GM12878 (cell line): ENCODE measurements at regions of chr2 and their contacts with region 1.

Region 1: DNA sequence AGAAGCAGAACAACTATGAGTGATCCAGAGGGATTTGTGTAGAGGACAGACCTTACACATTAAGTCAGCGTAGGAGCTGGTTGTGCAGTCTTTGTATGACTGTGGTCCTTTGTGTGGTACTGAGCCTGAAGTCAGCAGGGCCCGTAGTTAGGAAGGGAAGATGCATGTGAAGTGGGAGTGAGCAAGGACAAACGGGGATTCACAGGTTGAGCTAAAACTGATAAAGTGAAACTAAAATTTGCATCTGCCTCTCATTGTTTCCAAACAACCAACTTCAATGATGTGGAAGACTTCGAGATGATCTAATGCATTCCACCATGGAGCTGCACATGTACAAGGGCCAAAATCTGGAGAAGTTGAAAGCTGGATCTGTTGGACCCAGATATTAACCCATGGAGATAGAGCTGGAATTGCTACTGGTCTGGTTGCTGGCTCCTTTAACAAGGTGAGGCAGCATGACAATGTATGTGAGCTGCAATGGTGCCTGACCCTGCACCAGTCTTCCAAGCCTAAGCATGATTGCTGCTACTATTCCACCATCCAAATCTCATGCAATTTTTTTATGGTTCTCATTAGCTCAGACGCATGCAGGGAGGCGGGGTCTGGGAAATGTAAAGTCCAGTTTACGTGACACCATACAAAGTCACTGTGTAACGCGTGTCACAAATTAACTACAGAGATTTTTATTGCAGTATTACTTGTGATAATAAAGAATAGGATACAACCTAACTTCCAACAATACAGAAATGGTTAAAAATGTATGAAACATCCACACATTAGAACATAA is 12.1 kb upstream of the CYBRD1 start:
- DNase-seq: peak; percentile 75
- ATAC-seq: peak; percentile 83
- H3K4me3 ChIP-seq: no peak overlapping the region
- H3K27ac ChIP-seq: peak overlapping the region; percentile 30
- H3K4me1 ChIP-seq: peaks cover 30% of the 10 kb centered on the region
- H3K27me3 ChIP-seq: no peaks in the 10 kb centered on the region
- CTCF ChIP-seq: no peak
- EP300 ChIP-seq: peak in 1 of 2 experiments; percentile 35; a peak in 1 of 4 replicates
- POLR2A ChIP-seq: no peak
- RAD21 ChIP-seq: no peak

Region 2: DNA sequence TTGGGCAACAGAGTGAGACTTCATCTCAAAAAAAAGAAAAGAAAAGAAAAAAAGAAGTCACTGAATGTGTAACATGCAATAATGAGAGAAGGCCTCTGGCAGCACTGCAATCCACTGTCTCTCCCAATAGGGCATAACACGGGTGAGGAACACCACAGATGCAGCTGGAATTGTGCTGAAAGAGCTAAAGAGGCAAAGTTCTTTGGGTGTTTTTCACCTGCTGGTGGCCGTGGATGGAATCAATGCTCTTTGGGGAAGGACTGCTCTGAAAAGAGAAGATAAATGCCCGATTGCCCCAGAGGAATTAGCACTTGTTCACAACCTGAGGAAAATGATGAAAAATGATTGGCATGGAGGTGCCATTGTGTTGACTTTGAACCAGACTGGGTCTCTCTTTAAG is 18.8 kb before region 1 on chr2:
- CTCF ChIA-PET with region 1: interaction called, 6 read pairs
- POLR2A ChIA-PET with region 1: no interaction called
- RAD21 ChIA-PET with region 1: no interaction called
- SMC1A ChIA-PET with region 1: interaction called, 13 read pairs
- in situ Hi-C with region 1: no loop called
- intact Hi-C with region 1: no loop called
- DNase-seq: no peak
- ATAC-seq: no peak
- H3K4me3 ChIP-seq: no peak overlapping the region
- H3K27ac ChIP-seq: no peak overlapping the region
- H3K4me1 ChIP-seq: no peaks in the 10 kb centered on the region
- H3K27me3 ChIP-seq: no peaks in the 10 kb centered on the region
- CTCF ChIP-seq: no peak
- EP300 ChIP-seq: no peak
- POLR2A ChIP-seq: no peak
- RAD21 ChIP-seq: no peak

Region 3: GRCh38 chr2:171522052-171522787 is 12.1 kb after region 1 on chr2 and contains the start of gene CYBRD1:
- CTCF ChIA-PET with region 1: interaction called, 14 read pairs
- POLR2A ChIA-PET with region 1: interaction called, 13 read pairs
- RAD21 ChIA-PET with region 1: interaction called, 13 read pairs
- SMC1A ChIA-PET with region 1: interaction called, 46 read pairs
- in situ Hi-C with region 1: no loop called
- intact Hi-C with region 1: no loop called
- DNase-seq: no peak
- ATAC-seq: peak; percentile 79
- H3K4me3 ChIP-seq: peak within 1 kb of the TSS; percentile 95
- H3K27ac ChIP-seq: peak within 1 kb of the TSS; percentile 81
- H3K4me1 ChIP-seq: peaks cover 6% of the 10 kb centered on the region; the same call in 1 of the 2 replicates
- H3K27me3 ChIP-seq: no peaks in the 10 kb centered on the region
- CTCF ChIP-seq: 0 out of 6 replicates have a peak, but pooled peaks of 1 of the 3 experiments have one; percentile 4
- EP300 ChIP-seq: no peak
- POLR2A ChIP-seq: peak; percentile 90
- RAD21 ChIP-seq: no peak
- polyA plus RNA-seq, gene CYBRD1: 10.8 to 13.2 TPM

Region 4: DNA sequence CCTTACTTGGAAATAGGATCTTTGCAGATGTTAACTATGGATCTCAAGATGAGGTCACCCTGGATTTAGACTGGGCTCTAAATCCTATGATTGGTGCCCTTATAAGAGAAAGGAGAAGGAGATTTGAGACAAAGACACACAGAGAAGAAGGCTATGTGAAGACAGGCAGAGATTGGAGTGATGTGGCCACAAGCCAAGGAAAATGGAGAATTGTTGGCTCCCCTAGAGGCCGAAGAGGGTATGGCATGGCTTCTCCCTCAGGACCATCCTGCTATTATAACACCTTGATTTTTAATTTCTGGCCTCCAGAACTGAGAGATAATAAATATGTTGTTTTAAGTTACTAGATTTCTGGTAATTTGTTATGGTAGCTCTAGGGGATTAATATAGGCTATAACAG is 19.8 kb after region 1 on chr2:
- CTCF ChIA-PET with region 1: interaction called, 12 read pairs
- POLR2A ChIA-PET with region 1: interaction called, 9 read pairs
- RAD21 ChIA-PET with region 1: interaction called, 23 read pairs
- SMC1A ChIA-PET with region 1: interaction called, 33 read pairs
- in situ Hi-C with region 1: no loop called
- intact Hi-C with region 1: no loop called
- DNase-seq: no peak
- ATAC-seq: peak; percentile 44; the same call in 2 of the 3 replicates
- H3K4me3 ChIP-seq: no peak overlapping the region
- H3K27ac ChIP-seq: peak overlapping the region; percentile 57
- H3K4me1 ChIP-seq: peaks cover 11% of the 10 kb centered on the region
- H3K27me3 ChIP-seq: no peaks in the 10 kb centered on the region
- CTCF ChIP-seq: peak; percentile 11 to 74 (median 63); a peak in 5 of 6 replicates
- EP300 ChIP-seq: no peak
- POLR2A ChIP-seq: no peak
- RAD21 ChIP-seq: 0 out of 2 replicates have a peak, but pooled peaks have one; percentile 6